Aorta (tissue), 5 donors: ENCODE measurements at regions of chr12 and their contacts with region 1.

Region 1: GRCh38 chr12:102061560-102062418 is at the start of gene WASHC3:
- DNase-seq: peak; percentile 98 to 99
- ATAC-seq: peak; percentile 99
- H3K4me3 ChIP-seq: peak within 1 kb of the TSS; percentile 67 to 99
- H3K27ac ChIP-seq: peak within 1 kb of the TSS in 1 of 2 donors; percentile 88
- H3K4me1 ChIP-seq: no peaks in the 10 kb centered on the region
- H3K27me3 ChIP-seq: no peaks in the 10 kb centered on the region
- total RNA-seq, gene WASHC3: 36.9 to 57.4 TPM

Region 2: DNA sequence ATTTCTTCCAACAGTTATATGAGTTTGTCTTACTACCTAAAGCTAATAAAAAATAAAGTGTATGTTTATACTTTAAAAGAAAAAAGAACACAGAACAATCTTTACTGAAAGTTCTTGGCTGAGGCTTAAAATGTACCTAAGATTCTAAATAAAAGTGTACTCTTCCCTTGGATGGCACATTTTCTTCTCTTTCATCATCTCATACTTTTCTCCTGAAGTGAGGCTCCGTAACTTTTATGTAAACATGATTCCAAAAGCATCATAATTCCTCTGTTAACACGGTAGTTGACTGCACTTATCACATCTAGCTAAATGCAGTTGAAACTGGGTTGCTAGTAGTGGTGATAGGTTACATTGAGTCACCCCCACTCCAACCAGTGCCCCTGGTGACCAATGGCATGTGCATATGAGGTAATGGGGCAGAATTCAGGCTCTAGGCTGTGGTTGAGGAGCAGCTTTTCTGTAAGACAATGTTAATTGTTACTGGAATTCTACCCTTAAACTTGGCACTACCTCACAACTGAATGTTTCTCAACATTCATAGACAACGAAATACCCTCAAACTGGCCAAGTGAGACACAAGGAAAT is 38.4 kb before region 1 on chr12:
- intact Hi-C with region 1: loop called in 1 of 2 experiments (anchors 5 kb)
- DNase-seq: no peak
- ATAC-seq: no peak
- H3K4me3 ChIP-seq: no peak overlapping the region
- H3K27ac ChIP-seq: no peak overlapping the region
- H3K4me1 ChIP-seq: peaks cover 0 to under 1% of the 10 kb centered on the region in 2 donors
- H3K27me3 ChIP-seq: no peaks in the 10 kb centered on the region

Region 3: DNA sequence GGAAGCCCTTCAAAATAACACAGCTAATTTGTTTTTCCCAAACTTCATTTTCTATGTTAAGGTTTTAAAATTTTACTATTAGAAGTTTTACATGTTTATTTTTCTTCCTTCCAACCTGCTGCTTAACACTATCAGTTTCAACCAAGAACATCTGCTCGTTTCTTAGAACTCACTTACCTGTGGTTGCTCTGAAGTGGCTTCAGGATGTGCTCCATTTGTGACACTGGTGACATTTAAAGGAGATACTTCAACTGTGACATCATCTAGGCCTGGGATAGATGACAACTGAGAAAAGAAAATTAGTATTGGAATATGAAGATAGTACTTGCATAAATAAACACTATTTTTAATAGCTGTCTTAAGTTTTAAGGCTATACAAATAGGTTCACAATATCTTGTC is 17.9 kb before region 1 on chr12:
- intact Hi-C with region 1: no loop called
- DNase-seq: no peak
- ATAC-seq: no peak
- H3K4me3 ChIP-seq: no peak overlapping the region
- H3K27ac ChIP-seq: no peak overlapping the region
- H3K4me1 ChIP-seq: no peaks in the 10 kb centered on the region
- H3K27me3 ChIP-seq: no peaks in the 10 kb centered on the region

Region 4: GRCh38 chr12:102119674-102120563 is 58.1 kb after region 1 on chr12 and contains the starts of genes NUP37 and PARPBP:
- intact Hi-C with region 1: loop called (anchors 5 to 10 kb)
- DNase-seq: peak; percentile 94 to 97
- ATAC-seq: peak; percentile 98
- H3K4me3 ChIP-seq: peak within 1 kb of the TSS; percentile 77 to 79
- H3K27ac ChIP-seq: peak within 1 kb of the TSS; percentile 6 to 41
- H3K4me1 ChIP-seq: peaks cover 0 to 3% of the 10 kb centered on the region in 2 donors
- H3K27me3 ChIP-seq: no peaks in the 10 kb centered on the region
- total RNA-seq, gene NUP37: 12.6 to 16.1 TPM
- total RNA-seq, gene PARPBP: 2.9 to 7.2 TPM

Region 5: GRCh38 chr12:102215992-102216691 is 154.4 kb after region 1 on chr12:
- intact Hi-C with region 1: no loop called
- DNase-seq: no peak
- ATAC-seq: no peak
- H3K4me3 ChIP-seq: no peak overlapping the region
- H3K27ac ChIP-seq: no peak overlapping the region
- H3K4me1 ChIP-seq: no peaks in the 10 kb centered on the region
- H3K27me3 ChIP-seq: no peaks in the 10 kb centered on the region